ENCODE measurements at regions of chr11 and their contacts with region 1.

Region 1: GRCh38 chr11:75399344-75400145 is at the start of gene RPS3:
- DNase-seq: peak; percentile 79 to 94 (median 84)
- ATAC-seq: peak; percentile 88
- H3K4me3 ChIP-seq: peak within 1 kb of the TSS; percentile 72
- H3K4me3 Mint-ChIP-seq: peak within 1 kb of the TSS; percentile 86
- H3K27ac ChIP-seq: peak within 1 kb of the TSS; percentile 86 to 88
- H3K27ac Mint-ChIP-seq: peak within 1 kb of the TSS; percentile 92
- H3K4me1 ChIP-seq: peaks cover 44% of the 10 kb centered on the region
- H3K4me1 Mint-ChIP-seq: peaks cover 54% of the 10 kb centered on the region
- H3K27me3 ChIP-seq: no peaks in the 10 kb centered on the region
- H3K27me3 Mint-ChIP-seq: no peaks in the 10 kb centered on the region
- CTCF ChIP-seq: peak; percentile 33
- total RNA-seq, gene RPS3: 4,753 to 4,828 TPM

Region 2: DNA sequence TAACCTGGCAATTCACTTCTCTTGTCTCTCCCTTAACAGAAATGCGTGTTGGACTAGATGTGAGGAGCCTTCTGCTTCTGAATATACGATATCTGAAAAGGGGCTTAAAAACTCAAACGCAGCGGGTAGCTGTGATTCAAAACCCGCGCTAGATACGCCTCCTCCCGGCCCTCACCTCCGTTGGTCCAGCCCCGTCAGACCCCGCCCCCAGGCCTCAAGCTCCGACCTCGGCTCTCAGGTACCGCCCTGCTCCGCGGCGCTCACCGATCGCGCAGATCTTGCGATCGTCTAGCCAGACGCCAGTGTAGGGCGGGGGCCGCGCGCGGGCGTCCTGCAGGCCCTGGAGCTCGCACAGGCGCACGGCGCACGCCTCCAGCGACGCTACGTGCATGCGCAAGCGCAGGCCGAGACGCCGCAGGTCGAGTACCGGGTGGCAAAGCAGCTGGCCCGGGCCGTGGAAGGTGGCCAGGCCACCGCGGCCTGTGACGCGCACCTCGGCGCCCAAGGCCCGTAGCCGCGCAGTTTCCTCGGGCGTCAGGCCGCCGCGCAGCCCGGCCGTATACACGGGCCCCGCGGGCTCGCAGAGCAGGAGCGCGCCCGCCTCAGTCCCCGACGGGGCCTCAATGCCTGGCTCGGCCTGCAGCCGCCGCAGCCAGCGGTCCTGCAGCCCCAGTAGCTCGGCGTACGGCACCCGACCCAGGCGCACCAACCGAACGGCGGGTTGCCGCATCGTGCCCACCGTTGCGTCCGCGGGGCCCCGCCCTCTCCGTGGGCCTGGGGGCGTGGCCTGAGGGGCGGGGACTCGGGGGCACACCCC is 906.4 kb before region 1 on chr11 and contains the start of gene LIPT2:
- CTCF ChIA-PET with region 1: no interaction called
- POLR2A ChIA-PET with region 1: no interaction called
- intact Hi-C with region 1: loop called in 1 of 2 experiments (anchors 10 kb)
- DNase-seq: peak; percentile 94 to 99 (median 98)
- ATAC-seq: peak; percentile 95
- H3K4me3 ChIP-seq: peak within 1 kb of the TSS; percentile 66
- H3K4me3 Mint-ChIP-seq: peak within 1 kb of the TSS; percentile 91
- H3K27ac ChIP-seq: peak within 1 kb of the TSS; percentile 61 to 94
- H3K27ac Mint-ChIP-seq: peak within 1 kb of the TSS; percentile 86
- H3K4me1 ChIP-seq: peaks cover 12% of the 10 kb centered on the region
- H3K4me1 Mint-ChIP-seq: peaks cover 41% of the 10 kb centered on the region
- H3K27me3 ChIP-seq: no peaks in the 10 kb centered on the region
- H3K27me3 Mint-ChIP-seq: no peaks in the 10 kb centered on the region
- CTCF ChIP-seq: no peak
- total RNA-seq, gene LIPT2: 10.7 to 10.9 TPM

Region 3: DNA sequence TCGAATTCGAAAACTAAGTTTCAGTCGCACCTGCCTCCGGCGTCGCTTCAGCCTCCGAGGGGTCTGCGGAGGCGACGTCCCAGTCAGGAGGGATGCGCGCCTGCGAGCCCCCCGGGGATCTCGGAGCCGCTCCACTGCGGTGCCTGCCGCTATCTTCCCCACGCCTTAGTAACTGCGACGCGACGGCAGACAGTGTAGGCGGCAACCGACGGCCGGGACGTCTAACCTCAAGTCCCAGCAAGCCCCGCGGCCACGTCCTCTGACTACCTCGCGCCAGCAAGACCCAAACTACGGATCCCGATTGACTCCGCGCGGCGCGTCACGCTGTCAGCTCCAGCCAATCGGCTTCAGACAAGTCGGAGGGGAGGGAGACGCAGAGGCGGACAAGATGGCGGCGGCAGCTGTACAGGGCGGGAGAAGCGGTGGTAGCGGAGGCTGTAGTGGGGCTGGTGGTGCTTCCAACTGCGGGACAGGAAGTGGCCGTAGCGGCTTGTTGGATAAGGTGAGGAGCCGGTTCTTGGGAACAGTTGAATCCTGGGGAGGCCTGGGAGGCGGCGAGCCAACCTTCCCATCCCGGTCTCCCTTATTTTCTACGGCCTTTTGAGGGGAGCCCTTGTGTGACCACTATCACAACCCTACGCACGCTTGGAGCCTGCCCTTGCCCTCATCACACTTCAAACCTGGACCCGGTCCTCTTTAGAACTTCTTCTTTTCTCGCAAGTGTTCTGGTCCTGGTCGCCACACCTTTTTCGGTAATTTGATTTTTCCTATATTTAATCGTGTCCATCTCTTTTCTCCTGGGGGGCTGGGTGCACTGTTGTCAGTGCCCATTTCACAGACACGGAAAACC is 450.4 kb before region 1 on chr11 and contains the starts of genes SPCS2 and XRRA1:
- CTCF ChIA-PET with region 1: no interaction called
- POLR2A ChIA-PET with region 1: no interaction called
- intact Hi-C with region 1: loop called in 1 of 2 experiments (anchors 5 kb)
- DNase-seq: peak; percentile 94 to 99 (median 97)
- ATAC-seq: peak; percentile 96
- H3K4me3 ChIP-seq: peak within 1 kb of the TSS; percentile 85
- H3K4me3 Mint-ChIP-seq: peak within 1 kb of the TSS; percentile 96
- H3K27ac ChIP-seq: peak within 1 kb of the TSS; percentile 71 to 76
- H3K27ac Mint-ChIP-seq: peak within 1 kb of the TSS; percentile 90
- H3K4me1 ChIP-seq: peaks cover 35% of the 10 kb centered on the region
- H3K4me1 Mint-ChIP-seq: peaks cover 65% of the 10 kb centered on the region
- H3K27me3 ChIP-seq: no peaks in the 10 kb centered on the region
- H3K27me3 Mint-ChIP-seq: no peaks in the 10 kb centered on the region
- CTCF ChIP-seq: no peak
- total RNA-seq, gene SPCS2: 36.5 to 42.9 TPM
- total RNA-seq, gene XRRA1: 12.2 to 12.5 TPM

Region 4: GRCh38 chr11:75429902-75430719 is 30.6 kb after region 1 on chr11:
- CTCF ChIA-PET with region 1: no interaction called
- POLR2A ChIA-PET with region 1: interaction called, 14 read pairs
- intact Hi-C with region 1: loop called in 1 of 2 experiments (anchors 5 kb)
- DNase-seq: peak; percentile 34 to 86 (median 54)
- ATAC-seq: peak; percentile 65
- H3K4me3 ChIP-seq: peak overlapping the region; percentile 43
- H3K4me3 Mint-ChIP-seq: peak overlapping the region; percentile 82
- H3K27ac ChIP-seq: no peak overlapping the region
- H3K27ac Mint-ChIP-seq: peak overlapping the region; percentile 11
- H3K4me1 ChIP-seq: peaks cover 30% of the 10 kb centered on the region
- H3K4me1 Mint-ChIP-seq: peaks cover 30% of the 10 kb centered on the region
- H3K27me3 ChIP-seq: peaks cover 32 to 38% of the 10 kb centered on the region in 2 experiments
- H3K27me3 Mint-ChIP-seq: peaks cover 55% of the 10 kb centered on the region
- CTCF ChIP-seq: no peak

Region 5: GRCh38 chr11:75525596-75526541 is 126.3 kb after region 1 on chr11 and contains the start of gene GDPD5:
- CTCF ChIA-PET with region 1: interaction called, 7 read pairs
- POLR2A ChIA-PET with region 1: interaction called, 5 read pairs
- intact Hi-C with region 1: loop called in 1 of 2 experiments (anchors 2 kb)
- DNase-seq: peak; percentile 73 to 95 (median 84)
- ATAC-seq: peak; percentile 92
- H3K4me3 ChIP-seq: peak within 1 kb of the TSS; percentile 78
- H3K4me3 Mint-ChIP-seq: peak within 1 kb of the TSS; percentile 94
- H3K27ac ChIP-seq: no peak within 1 kb of the TSS
- H3K27ac Mint-ChIP-seq: peak within 1 kb of the TSS; percentile 80
- H3K4me1 ChIP-seq: peaks cover 45% of the 10 kb centered on the region
- H3K4me1 Mint-ChIP-seq: peaks cover 57% of the 10 kb centered on the region
- H3K27me3 ChIP-seq: no peaks in the 10 kb centered on the region
- H3K27me3 Mint-ChIP-seq: no peaks in the 10 kb centered on the region
- CTCF ChIP-seq: no peak
- total RNA-seq, gene GDPD5: 91.6 to 101 TPM

Measured in CD4-positive, alpha-beta T cell (primary cell).